ENCODE measurements at regions of chr20 and their contacts with region 1.

Region 1: DNA sequence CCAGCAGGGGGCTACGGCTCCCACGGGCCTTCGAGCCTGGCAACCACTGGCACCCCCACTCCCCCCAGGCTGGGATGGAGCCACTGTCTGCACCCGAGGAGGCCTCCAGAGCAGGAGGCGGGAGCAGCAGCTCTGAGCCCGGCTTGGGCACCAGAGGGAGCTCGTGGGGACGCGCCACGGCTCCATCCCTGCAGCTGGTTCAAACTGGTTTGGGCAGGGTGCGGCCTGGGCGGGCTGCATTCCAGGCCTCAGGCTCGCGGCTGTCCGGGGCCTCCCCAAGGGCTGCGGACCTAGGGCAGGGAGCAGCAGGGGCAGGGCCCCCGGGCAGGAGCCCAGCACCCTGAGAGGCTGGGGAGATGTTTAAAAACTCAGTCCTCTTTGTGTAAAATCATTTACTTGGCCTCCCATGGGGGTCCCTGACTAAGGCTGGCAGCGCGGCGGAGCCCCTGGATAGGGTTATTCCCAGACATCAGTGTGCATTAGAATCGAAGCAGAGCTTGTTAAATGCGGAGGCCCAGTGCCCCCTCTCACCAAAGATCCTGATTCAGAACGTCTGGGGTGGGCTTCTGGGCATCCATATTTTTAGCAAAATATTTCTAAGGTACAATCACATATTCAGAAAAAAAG is 4.1 kb upstream of the BCAS4 start:
- DNase-seq: peak; percentile 83 to 97
- H3K4me3 ChIP-seq: no peak overlapping the region
- CTCF ChIP-seq: no peak
- POLR2A ChIP-seq: no peak

Region 2: DNA sequence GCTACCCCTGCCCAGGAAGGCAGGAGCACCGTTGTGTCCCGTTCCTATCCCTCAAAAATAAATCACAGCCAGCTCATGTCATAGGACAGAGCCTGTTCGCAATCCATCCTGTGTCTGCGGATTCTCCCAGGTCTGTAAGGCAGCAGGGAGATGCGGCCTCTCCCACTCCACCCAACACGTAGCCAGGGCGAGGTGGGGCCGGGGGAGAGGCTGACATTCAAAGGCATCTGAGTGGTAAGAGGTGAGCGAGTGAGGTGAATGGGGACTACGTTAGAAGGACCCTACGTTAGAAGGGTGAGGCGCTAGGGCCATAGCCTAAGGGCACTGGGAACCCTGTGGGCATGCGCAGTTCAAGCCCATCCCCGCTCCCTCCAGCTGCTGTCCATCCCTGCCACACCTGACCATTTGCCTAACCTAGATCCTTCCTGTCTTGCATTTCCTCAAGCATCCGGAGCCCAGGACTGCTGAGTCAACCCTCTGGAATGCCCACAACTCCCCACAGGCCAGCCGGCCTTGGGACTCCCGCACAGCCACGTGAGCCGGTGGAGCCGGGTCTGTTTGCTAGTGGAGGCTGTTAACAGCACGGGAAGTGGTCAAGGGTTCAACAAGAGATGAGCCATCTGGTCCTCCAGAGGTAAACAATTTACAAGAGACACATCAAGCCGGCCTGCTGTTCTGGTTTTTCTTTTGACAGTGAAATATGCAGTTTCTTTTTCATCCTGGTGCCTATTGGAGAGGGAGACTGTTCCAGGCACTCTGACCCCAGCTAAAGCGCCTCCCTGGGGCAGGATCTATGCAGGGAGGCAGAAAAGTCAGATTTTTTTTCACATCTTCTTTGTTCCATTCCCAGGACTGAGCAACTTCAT is 145.3 kb before region 1 on chr20:
- intact Hi-C with region 1: no loop called
- DNase-seq: peak in 1 of 2 donors; percentile 68
- H3K4me3 ChIP-seq: no peak overlapping the region
- CTCF ChIP-seq: peak in 1 of 3 donors; percentile 13
- POLR2A ChIP-seq: no peak

Region 3: DNA sequence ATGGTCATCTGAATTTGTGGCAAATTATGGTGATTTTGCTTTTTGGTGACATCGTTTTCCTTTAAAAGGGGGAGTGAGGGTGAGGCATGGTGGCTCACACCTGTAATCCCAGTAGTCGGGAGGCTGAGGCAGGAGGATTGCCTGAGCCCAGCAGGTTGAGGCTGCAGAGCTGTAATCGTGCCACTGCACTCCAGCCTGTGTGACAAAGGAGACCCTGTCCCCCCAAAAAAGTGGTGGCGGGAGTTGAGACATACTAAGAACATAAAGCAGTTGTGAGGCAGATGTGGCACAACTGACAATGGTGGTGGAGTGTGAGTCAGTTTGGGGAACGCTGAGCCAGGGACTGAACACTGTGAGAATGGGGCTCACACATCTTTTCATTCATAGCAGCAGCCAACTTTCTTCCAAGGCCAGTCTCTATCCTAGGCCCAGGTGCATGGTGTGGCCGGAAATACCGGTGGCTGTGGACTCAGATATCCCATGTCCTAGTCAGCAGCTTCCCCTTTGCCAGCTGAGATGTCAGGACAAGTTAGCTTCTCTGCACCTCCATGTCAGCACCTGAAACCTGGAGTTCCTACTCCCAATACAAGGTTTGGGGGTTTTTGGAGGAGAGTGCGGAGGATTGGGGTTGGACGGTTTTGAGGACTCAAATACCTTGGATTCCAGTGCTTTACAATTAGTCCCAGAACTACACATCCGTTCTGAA is 95.2 kb after region 1 on chr20:
- intact Hi-C with region 1: no loop called
- DNase-seq: peak in 1 of 2 donors; percentile 45
- H3K4me3 ChIP-seq: no peak overlapping the region
- CTCF ChIP-seq: no peak
- POLR2A ChIP-seq: no peak

Region 4: DNA sequence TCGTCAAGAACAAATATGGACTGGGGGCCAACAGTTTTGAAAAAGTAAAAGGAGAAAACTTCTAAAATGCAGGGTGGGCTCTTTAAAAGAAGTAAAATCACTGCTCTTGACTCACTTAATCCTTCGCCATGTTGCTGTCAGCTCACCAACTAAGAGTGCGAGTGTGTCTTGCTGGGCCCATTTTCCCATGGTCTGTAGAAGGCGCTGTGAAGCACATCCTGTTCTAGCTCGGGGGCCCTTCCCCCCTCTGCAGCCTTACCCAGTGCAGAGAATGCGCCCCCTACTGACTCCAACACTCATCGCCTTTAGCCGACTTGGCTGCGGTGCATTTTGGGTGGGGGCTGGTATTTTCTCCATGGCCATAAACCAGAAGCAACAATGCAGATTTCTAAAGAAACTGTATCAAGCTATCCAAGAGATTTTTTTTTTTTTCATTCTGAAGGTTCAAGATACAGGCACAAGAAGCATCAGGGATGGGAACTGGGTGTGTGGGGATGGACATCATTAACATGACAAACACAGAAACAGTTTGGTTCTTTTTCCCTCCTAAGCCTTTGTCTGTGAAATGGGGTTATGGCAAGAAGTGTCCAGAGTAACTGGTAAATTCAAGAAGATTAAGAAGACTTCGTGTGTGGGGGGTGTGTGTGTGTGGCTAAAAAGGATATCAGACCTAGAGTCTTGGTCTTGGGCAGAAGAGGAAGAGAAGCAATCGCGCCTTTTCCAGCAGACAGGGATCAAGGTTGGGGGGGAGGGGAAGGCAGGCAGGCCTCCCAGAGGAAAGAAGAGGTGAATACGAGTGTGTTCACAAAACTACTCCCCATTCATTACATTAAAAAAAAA is 138.8 kb after region 1 on chr20:
- intact Hi-C with region 1: loop called (anchors 10 kb)
- DNase-seq: peak; percentile 88 to 96
- H3K4me3 ChIP-seq: peak overlapping the region; percentile 89
- CTCF ChIP-seq: peak in 1 of 3 donors; percentile 92
- POLR2A ChIP-seq: no peak

Measured in lower leg skin (tissue), 4 donors.